Caco-2 (cell line): ENCODE measurements at regions of chr11 and their contacts with region 1.

Region 1: GRCh38 chr11:68066742-68067141 is 27.9 kb downstream of the TCIRG1 start:
- DNase-seq: peak in 1 of 2 experiments; percentile 34
- H3K4me3 ChIP-seq: no peak overlapping the region
- H3K4me3 Mint-ChIP-seq: no peak overlapping the region
- H3K27ac Mint-ChIP-seq: no peak overlapping the region
- H3K4me1 ChIP-seq: no peaks in the 10 kb centered on the region
- H3K4me1 Mint-ChIP-seq: no peaks in the 10 kb centered on the region
- H3K27me3 ChIP-seq: no peaks in the 10 kb centered on the region
- H3K27me3 Mint-ChIP-seq: no peaks in the 10 kb centered on the region
- CTCF ChIP-seq: no peak

Region 2: DNA sequence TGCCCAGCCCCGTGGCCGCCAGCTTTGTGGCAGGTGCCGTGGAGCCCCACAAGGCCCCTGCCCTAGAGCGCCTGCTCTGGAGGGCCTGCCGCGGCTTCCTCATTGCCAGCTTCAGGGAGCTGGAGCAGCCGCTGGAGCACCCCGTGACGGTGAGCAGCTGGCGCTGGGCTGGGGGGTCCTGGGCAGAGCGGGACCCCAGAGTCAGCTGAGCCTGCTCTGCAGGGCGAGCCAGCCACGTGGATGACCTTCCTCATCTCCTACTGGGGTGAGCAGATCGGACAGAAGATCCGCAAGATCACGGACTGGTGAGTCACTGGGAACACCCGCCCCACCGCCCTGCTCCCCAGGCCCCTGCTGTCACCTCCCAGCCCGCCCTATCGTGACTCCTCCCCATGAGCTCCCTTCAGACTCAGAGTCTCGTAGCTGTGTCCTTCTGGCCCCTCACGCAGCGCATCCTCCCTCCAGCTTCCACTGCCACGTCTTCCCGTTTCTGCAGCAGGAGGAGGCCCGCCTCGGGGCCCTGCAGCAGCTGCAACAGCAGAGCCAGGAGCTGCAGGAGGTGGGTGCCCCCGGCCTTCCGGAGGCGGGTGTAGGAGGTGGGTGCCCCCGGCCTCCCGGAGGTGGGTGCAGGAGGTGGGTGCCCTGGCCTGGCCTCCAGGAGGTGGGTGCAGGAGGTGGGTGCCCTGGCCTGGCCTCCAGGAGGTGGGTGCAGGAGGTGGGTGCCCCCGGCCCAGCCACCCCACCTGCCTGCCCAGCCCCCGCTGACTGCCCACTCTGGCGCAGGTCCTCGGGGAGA is 23.2 kb before region 1 on chr11:
- CTCF ChIA-PET with region 1: no interaction called
- POLR2A ChIA-PET with region 1: interaction called, 13 read pairs
- intact Hi-C with region 1: no loop called
- DNase-seq: peak; percentile 50 to 71
- H3K4me3 ChIP-seq: no peak overlapping the region
- H3K4me3 Mint-ChIP-seq: no peak overlapping the region
- H3K27ac Mint-ChIP-seq: no peak overlapping the region
- H3K4me1 ChIP-seq: peaks cover 26% of the 10 kb centered on the region
- H3K4me1 Mint-ChIP-seq: peaks cover 8% of the 10 kb centered on the region
- H3K27me3 ChIP-seq: no peaks in the 10 kb centered on the region
- H3K27me3 Mint-ChIP-seq: no peaks in the 10 kb centered on the region
- CTCF ChIP-seq: no peak

Region 3: DNA sequence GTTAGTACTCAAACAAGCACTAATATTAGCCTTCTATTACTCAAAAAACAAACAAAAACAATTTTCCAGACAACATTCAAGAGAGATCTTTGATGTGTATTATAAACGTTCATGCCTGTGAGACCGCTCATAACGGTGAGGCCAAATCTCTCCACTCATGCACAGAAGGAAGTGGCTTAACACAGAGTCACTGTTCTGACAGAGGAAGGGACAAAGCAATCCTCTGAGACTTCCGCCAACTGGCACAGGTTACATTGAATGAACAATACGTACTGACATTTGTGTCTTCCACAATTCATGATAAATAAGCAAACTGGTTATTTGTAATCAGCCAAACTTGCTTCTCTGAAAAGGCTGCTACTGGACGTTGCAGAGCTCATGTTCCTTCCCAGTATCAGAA is 24.0 kb after region 1 on chr11:
- CTCF ChIA-PET with region 1: no interaction called
- POLR2A ChIA-PET with region 1: no interaction called
- intact Hi-C with region 1: loop called (anchors 1 kb)
- DNase-seq: no peak
- H3K4me3 ChIP-seq: no peak overlapping the region
- H3K4me3 Mint-ChIP-seq: no peak overlapping the region
- H3K27ac Mint-ChIP-seq: no peak overlapping the region
- H3K4me1 ChIP-seq: peaks cover 5% of the 10 kb centered on the region; the same call in 1 of the 2 replicates
- H3K4me1 Mint-ChIP-seq: peaks cover 12% of the 10 kb centered on the region
- H3K27me3 ChIP-seq: no peaks in the 10 kb centered on the region
- H3K27me3 Mint-ChIP-seq: no peaks in the 10 kb centered on the region
- CTCF ChIP-seq: no peak

Region 4: GRCh38 chr11:68287419-68287818 is 220.7 kb after region 1 on chr11:
- CTCF ChIA-PET with region 1: no interaction called
- POLR2A ChIA-PET with region 1: no interaction called
- intact Hi-C with region 1: no loop called
- DNase-seq: no peak
- H3K4me3 ChIP-seq: no peak overlapping the region
- H3K4me3 Mint-ChIP-seq: no peak overlapping the region
- H3K27ac Mint-ChIP-seq: no peak overlapping the region
- H3K4me1 ChIP-seq: no peaks in the 10 kb centered on the region
- H3K4me1 Mint-ChIP-seq: no peaks in the 10 kb centered on the region
- H3K27me3 ChIP-seq: no peaks in the 10 kb centered on the region
- H3K27me3 Mint-ChIP-seq: no peaks in the 10 kb centered on the region
- CTCF ChIP-seq: no peak